Endothelial cell of umbilical vein (primary cell): ENCODE measurements at regions of chr5 and their contacts with region 1.

Region 1: GRCh38 chr5:141976176-141976575 is 7.3 kb downstream of the RNF14 start:
- DNase-seq: no peak
- H3K4me3 ChIP-seq: no peak overlapping the region
- H3K27ac ChIP-seq: no peak overlapping the region
- H3K4me1 ChIP-seq: peaks cover 6% of the 10 kb centered on the region
- H3K27me3 ChIP-seq: no peaks in the 10 kb centered on the region
- CTCF ChIP-seq: no peak
- POLR2A ChIP-seq: no peak

Region 2: GRCh38 chr5:141992349-141992963 is 16.3 kb after region 1 on chr5:
- CTCF ChIA-PET with region 1: interaction called, 14 read pairs
- POLR2A ChIA-PET with region 1: no interaction called
- dilution Hi-C with region 1: no loop called
- intact Hi-C with region 1: no loop called
- DNase-seq: peak; percentile 72
- H3K4me3 ChIP-seq: no peak overlapping the region
- H3K27ac ChIP-seq: no peak overlapping the region
- H3K4me1 ChIP-seq: no peaks in the 10 kb centered on the region
- H3K27me3 ChIP-seq: no peaks in the 10 kb centered on the region
- CTCF ChIP-seq: peak; percentile 45 to 58
- POLR2A ChIP-seq: no peak

Region 3: DNA sequence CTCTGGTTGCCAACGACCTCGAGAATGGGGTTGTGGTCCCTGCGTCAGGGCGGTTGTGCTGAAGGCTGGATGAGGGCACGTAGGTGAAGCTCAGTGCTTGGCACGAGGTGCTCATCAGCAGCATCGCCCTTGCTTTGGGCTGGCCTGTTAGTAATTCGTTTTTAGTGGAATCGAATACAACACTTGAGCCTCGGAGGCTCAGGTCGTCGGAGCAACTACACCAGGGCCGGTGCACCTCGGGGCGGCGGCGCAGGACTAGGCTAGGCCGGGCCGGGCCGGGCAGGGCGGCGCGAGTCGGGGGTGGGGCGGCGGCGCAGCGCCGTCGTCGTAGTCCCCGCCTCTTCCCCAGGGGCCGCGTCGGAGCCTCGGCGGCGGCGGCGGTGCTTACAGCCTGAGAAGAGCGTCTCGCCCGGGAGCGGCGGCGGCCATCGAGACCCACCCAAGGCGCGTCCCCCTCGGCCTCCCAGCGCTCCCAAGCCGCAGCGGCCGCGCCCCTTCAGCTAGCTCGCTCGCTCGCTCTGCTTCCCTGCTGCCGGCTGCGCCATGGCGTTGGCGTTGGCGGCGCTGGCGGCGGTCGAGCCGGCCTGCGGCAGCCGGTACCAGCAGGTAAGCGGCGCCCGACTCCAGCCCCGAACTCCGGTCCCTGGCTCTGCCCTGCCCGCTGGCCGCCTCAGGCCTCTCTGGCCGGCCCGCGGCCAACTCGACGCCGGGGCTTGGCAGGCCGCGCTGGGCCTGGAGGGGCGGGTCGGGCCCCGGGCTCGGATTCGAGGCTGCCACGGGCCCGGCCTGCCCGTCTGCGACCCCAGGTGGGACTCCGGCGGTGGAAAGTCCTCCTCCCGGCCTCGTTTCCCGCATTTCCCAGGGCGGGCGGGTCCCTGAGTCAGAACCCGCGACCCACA is 132.5 kb after region 1 on chr5 and contains the start of gene NDFIP1:
- CTCF ChIA-PET with region 1: no interaction called
- POLR2A ChIA-PET with region 1: no interaction called
- dilution Hi-C with region 1: no loop called
- intact Hi-C with region 1: no loop called
- DNase-seq: peak; percentile 85
- H3K4me3 ChIP-seq: peak within 1 kb of the TSS; percentile 64 to 84 (median 80)
- H3K27ac ChIP-seq: peak within 1 kb of the TSS; percentile 75
- H3K4me1 ChIP-seq: peaks cover 14% of the 10 kb centered on the region
- H3K27me3 ChIP-seq: no peaks in the 10 kb centered on the region
- CTCF ChIP-seq: no peak
- POLR2A ChIP-seq: peak; percentile 88
- total RNA-seq, gene NDFIP1: 40.3 and 42.6 TPM in 2 replicates